ENCODE measurements at regions of chr5 and their contacts with region 1.

Region 1: DNA sequence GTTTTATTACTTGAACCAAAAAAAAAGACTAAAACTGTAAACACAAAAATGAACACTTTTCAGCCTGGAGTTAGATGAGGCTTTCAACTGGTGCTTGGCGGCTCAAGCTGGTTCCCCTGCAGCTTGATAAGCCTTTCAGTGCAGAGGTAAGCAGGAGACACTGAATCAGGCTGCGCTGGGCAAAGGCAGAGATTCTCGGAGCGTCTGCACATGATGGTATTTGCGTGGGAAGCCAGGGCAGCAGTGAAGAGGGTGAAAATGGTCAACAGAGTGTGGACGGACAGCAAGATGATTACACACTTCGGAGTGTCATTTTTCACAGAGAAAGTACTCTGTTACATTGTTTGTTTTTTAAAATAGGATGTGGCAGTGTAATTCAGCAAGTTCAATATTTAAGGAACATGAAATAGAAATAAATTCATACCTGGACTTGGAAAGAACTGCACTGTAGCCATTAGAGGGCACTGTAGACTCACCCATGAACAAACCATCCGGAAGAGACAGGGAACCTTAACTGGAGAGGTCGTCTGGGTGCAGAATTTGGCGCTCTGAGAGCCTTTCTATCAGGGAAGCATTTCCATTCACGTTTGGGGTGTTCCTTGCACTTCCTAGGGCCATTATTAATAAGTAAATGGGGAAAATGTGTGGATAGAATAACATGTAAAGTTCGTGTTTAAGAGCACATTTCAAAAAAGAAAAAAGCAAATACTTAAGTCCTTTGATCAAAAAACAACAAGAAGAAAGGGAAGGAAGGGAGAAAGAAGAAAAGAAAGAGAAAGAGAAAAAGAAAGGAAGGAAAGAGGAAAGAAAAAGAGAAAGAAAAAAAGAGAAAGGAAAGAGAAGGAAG is 69.8 kb downstream of the ICE1 start:
- DNase-seq: peak; percentile 53 to 68
- H3K4me3 ChIP-seq: no peak overlapping the region
- H3K27ac ChIP-seq: no peak overlapping the region
- H3K4me1 ChIP-seq: no peaks in the 10 kb centered on the region
- H3K27me3 ChIP-seq: no peaks in the 10 kb centered on the region
- CTCF ChIP-seq: peak; percentile 91

Region 2: GRCh38 chr5:4868109-4868735 is 624.1 kb before region 1 on chr5:
- CTCF ChIA-PET with region 1: no interaction called
- POLR2A ChIA-PET with region 1: no interaction called
- intact Hi-C with region 1: loop called (anchors 2 kb)
- DNase-seq: peak; percentile 42 to 75
- H3K4me3 ChIP-seq: no peak overlapping the region
- H3K27ac ChIP-seq: no peak overlapping the region
- H3K4me1 ChIP-seq: no peaks in the 10 kb centered on the region
- H3K27me3 ChIP-seq: peaks cover 47% of the 10 kb centered on the region
- CTCF ChIP-seq: peak; percentile 98

Region 3: DNA sequence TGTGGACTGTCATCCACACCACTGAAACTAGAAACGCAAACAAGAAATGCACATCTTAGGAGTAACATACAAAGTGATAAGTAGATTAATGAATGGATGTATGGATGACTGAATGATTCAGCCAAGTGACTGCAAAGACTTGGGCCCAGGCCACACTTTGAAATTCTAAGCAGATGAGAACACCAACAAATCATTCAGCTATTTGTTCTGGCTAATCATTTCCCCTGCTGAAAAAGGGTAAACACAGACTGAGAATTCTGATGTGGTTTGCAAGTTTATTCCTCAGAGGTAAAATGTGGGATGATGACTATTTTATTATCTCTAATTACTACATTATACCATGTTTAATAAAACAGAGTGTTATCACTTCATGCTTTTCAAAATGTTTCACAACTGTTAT is 515.4 kb before region 1 on chr5:
- CTCF ChIA-PET with region 1: no interaction called
- POLR2A ChIA-PET with region 1: no interaction called
- intact Hi-C with region 1: no loop called
- DNase-seq: no peak
- H3K4me3 ChIP-seq: no peak overlapping the region
- H3K27ac ChIP-seq: no peak overlapping the region
- H3K4me1 ChIP-seq: no peaks in the 10 kb centered on the region
- H3K27me3 ChIP-seq: peaks cover 62% of the 10 kb centered on the region
- CTCF ChIP-seq: no peak

Region 4: GRCh38 chr5:6745706-6746222 is 1253.5 kb after region 1 on chr5:
- CTCF ChIA-PET with region 1: no interaction called
- POLR2A ChIA-PET with region 1: no interaction called
- intact Hi-C with region 1: loop called (anchors 1 kb)
- DNase-seq: peak in 1 of 2 experiments; percentile 67
- H3K4me3 ChIP-seq: no peak overlapping the region
- H3K27ac ChIP-seq: no peak overlapping the region
- H3K4me1 ChIP-seq: peaks cover 5% of the 10 kb centered on the region
- H3K27me3 ChIP-seq: no peaks in the 10 kb centered on the region
- CTCF ChIP-seq: peak; percentile 88

Region 5: GRCh38 chr5:6837519-6838110 is 1345.3 kb after region 1 on chr5:
- CTCF ChIA-PET with region 1: no interaction called
- POLR2A ChIA-PET with region 1: no interaction called
- intact Hi-C with region 1: loop called (anchors 10 kb)
- DNase-seq: peak in 1 of 2 experiments; percentile 55
- H3K4me3 ChIP-seq: no peak overlapping the region
- H3K27ac ChIP-seq: no peak overlapping the region
- H3K4me1 ChIP-seq: no peaks in the 10 kb centered on the region
- H3K27me3 ChIP-seq: peaks cover 48% of the 10 kb centered on the region
- CTCF ChIP-seq: peak; percentile 90

Measured in PC-9 (cell line).